CD8-positive, alpha-beta memory T cell (primary cell): ENCODE measurements at regions of chr13 and their contacts with region 1.

Region 1: GRCh38 chr13:99436686-99437416 is 64.4 kb upstream of the TM9SF2 start:
- DNase-seq: peak; percentile 91 to 96 (median 93)
- H3K4me3 ChIP-seq: peak overlapping the region; percentile 40
- H3K4me3 Mint-ChIP-seq: peak overlapping the region; percentile 29 to 76 (median 66)
- H3K27ac ChIP-seq: no peak overlapping the region
- H3K27ac Mint-ChIP-seq: peak overlapping the region; percentile 48 to 96 (median 86)
- H3K4me1 ChIP-seq: peaks cover 53% of the 10 kb centered on the region
- H3K4me1 Mint-ChIP-seq: peaks cover 55 to 62% (median 59%) of the 10 kb centered on the region in 3 donors
- H3K27me3 ChIP-seq: no peaks in the 10 kb centered on the region
- H3K27me3 Mint-ChIP-seq: no peaks in the 10 kb centered on the region

Region 2: GRCh38 chr13:99200432-99201167 is 236.3 kb before region 1 on chr13 and contains the start of gene UBAC2:
- CTCF ChIA-PET with region 1: interaction called, 12 read pairs
- POLR2A ChIA-PET with region 1: interaction called, 8 read pairs
- DNase-seq: peak; percentile 95 to 99 (median 98)
- H3K4me3 ChIP-seq: peak within 1 kb of the TSS; percentile 84
- H3K4me3 Mint-ChIP-seq: peak within 1 kb of the TSS; percentile 89 to 98 (median 95)
- H3K27ac ChIP-seq: peak within 1 kb of the TSS; percentile 95
- H3K27ac Mint-ChIP-seq: peak within 1 kb of the TSS; percentile 80 to 100 (median 98)
- H3K4me1 ChIP-seq: peaks cover 46% of the 10 kb centered on the region
- H3K4me1 Mint-ChIP-seq: peaks cover 54 to 71% (median 66%) of the 10 kb centered on the region in 3 donors
- H3K27me3 ChIP-seq: no peaks in the 10 kb centered on the region
- H3K27me3 Mint-ChIP-seq: peaks cover 0 to 4% of the 10 kb centered on the region in 2 donors
- total RNA-seq, gene UBAC2: 62.3 to 63.7 TPM

Region 3: GRCh38 chr13:99301913-99302636 is 134.8 kb before region 1 on chr13:
- CTCF ChIA-PET with region 1: interaction called, 22 read pairs
- POLR2A ChIA-PET with region 1: interaction called, 4 read pairs
- DNase-seq: no peak
- H3K4me3 ChIP-seq: peak overlapping the region; percentile 50
- H3K4me3 Mint-ChIP-seq: peak overlapping the region; percentile 88 to 95 (median 94)
- H3K27ac ChIP-seq: no peak overlapping the region
- H3K27ac Mint-ChIP-seq: peak overlapping the region; percentile 87 to 95 (median 92)
- H3K4me1 ChIP-seq: peaks cover 79% of the 10 kb centered on the region
- H3K4me1 Mint-ChIP-seq: peaks cover 76 to 84% (median 81%) of the 10 kb centered on the region in 3 donors
- H3K27me3 ChIP-seq: no peaks in the 10 kb centered on the region
- H3K27me3 Mint-ChIP-seq: no peaks in the 10 kb centered on the region

Region 4: DNA sequence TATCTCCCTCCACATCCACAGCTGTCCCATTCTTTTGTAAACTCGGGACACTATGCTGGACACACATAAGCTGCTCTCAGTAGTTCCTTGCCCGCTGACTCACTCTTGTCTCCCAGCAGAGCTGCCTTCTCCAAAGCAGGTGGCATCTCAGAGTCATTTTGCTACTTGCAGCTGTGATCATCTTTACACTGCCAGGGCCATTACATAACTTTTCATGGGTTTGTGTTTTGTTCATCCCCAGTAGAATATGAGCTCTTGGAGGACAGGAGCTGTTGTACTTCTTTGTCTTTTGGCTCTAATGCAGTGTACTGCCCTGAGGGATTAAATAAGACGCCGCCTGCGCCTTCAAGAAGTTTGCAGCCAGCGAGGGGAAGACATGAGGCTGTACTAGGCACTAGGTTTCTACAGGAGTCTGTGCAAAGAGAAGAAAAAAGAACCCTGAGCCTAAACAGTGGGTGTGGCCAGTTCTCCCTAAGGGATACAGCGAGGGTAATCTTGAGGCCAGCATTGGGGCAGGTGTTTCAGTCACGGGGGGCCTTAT is 88.9 kb before region 1 on chr13:
- CTCF ChIA-PET with region 1: interaction called, 43 read pairs
- POLR2A ChIA-PET with region 1: interaction called, 3 read pairs
- DNase-seq: no peak
- H3K4me3 ChIP-seq: no peak overlapping the region
- H3K4me3 Mint-ChIP-seq: peak overlapping the region in 4 of 7 donors; percentile 17 to 57 (median 46)
- H3K27ac ChIP-seq: no peak overlapping the region
- H3K27ac Mint-ChIP-seq: peak overlapping the region; percentile 84 to 99 (median 90)
- H3K4me1 ChIP-seq: peaks cover 64% of the 10 kb centered on the region
- H3K4me1 Mint-ChIP-seq: peaks cover 87 to 99% (median 99%) of the 10 kb centered on the region in 3 donors
- H3K27me3 ChIP-seq: no peaks in the 10 kb centered on the region
- H3K27me3 Mint-ChIP-seq: peaks cover 0 to 1% of the 10 kb centered on the region in 2 donors

Region 5: DNA sequence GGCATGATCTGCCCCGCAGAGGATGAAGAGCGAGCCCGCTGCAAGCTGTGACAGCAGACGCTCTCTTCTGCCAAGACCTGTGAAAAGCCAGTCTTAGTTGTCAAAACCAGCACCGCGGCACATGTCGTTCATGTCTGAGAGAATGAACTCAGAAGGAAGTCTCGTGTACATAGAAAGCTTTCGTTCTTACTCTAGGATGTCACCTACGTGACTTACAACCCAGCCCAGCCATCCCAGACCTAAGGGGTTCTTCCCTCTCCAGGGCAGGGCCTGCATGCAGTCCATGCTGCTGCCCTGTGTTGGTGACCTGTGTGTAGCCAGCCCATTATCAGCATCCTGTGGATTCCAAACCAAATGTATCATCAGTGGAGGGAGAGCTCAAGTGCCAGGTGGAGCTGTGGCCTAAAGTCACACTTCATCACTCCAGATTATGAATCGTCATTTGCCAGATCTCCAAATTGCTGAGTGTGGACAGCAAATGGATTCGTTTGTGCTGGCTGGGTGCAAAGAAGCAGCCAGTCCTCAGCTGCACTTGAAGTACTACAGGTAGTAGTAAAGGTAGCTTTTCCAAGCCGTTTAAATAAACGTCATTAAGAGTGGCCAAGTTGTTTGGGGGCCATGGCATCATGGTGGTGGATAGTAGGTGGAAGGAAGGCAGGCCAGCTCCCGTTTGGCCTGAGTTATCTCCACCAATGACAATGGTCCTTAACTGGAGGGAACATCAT is 55.8 kb before region 1 on chr13:
- CTCF ChIA-PET with region 1: interaction called, 81 read pairs
- POLR2A ChIA-PET with region 1: interaction called, 3 read pairs
- DNase-seq: peak; percentile 27 to 82 (median 62)
- H3K4me3 ChIP-seq: peak overlapping the region; percentile 14
- H3K4me3 Mint-ChIP-seq: peak overlapping the region; percentile 25 to 89 (median 73)
- H3K27ac ChIP-seq: peak overlapping the region; percentile 30
- H3K27ac Mint-ChIP-seq: peak overlapping the region; percentile 95 to 99 (median 98)
- H3K4me1 ChIP-seq: peaks cover 93% of the 10 kb centered on the region
- H3K4me1 Mint-ChIP-seq: peaks cover 84 to 98% (median 98%) of the 10 kb centered on the region in 3 donors
- H3K27me3 ChIP-seq: no peaks in the 10 kb centered on the region
- H3K27me3 Mint-ChIP-seq: no peaks in the 10 kb centered on the region

Region 6: GRCh38 chr13:99501184-99501847 is 64.5 kb after region 1 on chr13 and contains the start of gene TM9SF2:
- CTCF ChIA-PET with region 1: interaction called, 13 read pairs
- POLR2A ChIA-PET with region 1: no interaction called
- DNase-seq: peak; percentile 97 to 98 (median 97)
- H3K4me3 ChIP-seq: peak within 1 kb of the TSS; percentile 75
- H3K4me3 Mint-ChIP-seq: peak within 1 kb of the TSS; percentile 89 to 100 (median 98)
- H3K27ac ChIP-seq: peak within 1 kb of the TSS; percentile 94
- H3K27ac Mint-ChIP-seq: peak within 1 kb of the TSS; percentile 90 to 99 (median 98)
- H3K4me1 ChIP-seq: peaks cover 78% of the 10 kb centered on the region
- H3K4me1 Mint-ChIP-seq: peaks cover 71 to 92% (median 91%) of the 10 kb centered on the region in 3 donors
- H3K27me3 ChIP-seq: no peaks in the 10 kb centered on the region
- H3K27me3 Mint-ChIP-seq: peaks cover 0 to 5% of the 10 kb centered on the region in 2 donors
- total RNA-seq, gene TM9SF2: 88.0 to 96.0 TPM

Region 7: DNA sequence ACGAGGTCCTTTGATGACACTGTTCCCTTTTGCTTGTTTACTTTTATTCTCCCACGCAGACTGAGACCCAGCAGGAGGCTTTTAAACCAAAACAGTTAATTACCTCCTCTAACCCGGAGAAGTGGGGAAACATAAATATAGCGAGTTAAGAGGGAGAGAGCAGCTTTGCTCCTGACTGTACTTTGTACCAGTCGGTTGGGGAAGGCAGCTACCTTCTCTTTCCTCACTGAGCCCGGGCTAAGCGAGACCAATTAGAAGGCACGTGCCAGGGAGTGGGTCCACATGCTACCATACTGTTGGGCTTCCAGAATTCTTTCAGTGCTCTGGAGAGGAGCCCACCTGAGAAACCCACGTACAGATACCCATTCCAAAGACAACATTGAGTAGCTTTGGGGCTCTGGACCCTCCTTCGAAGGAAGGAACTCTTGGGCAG is 410.5 kb after region 1 on chr13:
- CTCF ChIA-PET with region 1: no interaction called
- POLR2A ChIA-PET with region 1: no interaction called
- DNase-seq: no peak
- H3K4me3 ChIP-seq: no peak overlapping the region
- H3K4me3 Mint-ChIP-seq: no peak overlapping the region
- H3K27ac ChIP-seq: no peak overlapping the region
- H3K27ac Mint-ChIP-seq: no peak overlapping the region
- H3K4me1 ChIP-seq: no peaks in the 10 kb centered on the region
- H3K4me1 Mint-ChIP-seq: peaks cover 0 to 1% (median 0%) of the 10 kb centered on the region in 3 donors
- H3K27me3 ChIP-seq: no peaks in the 10 kb centered on the region
- H3K27me3 Mint-ChIP-seq: no peaks in the 10 kb centered on the region

Region 8: DNA sequence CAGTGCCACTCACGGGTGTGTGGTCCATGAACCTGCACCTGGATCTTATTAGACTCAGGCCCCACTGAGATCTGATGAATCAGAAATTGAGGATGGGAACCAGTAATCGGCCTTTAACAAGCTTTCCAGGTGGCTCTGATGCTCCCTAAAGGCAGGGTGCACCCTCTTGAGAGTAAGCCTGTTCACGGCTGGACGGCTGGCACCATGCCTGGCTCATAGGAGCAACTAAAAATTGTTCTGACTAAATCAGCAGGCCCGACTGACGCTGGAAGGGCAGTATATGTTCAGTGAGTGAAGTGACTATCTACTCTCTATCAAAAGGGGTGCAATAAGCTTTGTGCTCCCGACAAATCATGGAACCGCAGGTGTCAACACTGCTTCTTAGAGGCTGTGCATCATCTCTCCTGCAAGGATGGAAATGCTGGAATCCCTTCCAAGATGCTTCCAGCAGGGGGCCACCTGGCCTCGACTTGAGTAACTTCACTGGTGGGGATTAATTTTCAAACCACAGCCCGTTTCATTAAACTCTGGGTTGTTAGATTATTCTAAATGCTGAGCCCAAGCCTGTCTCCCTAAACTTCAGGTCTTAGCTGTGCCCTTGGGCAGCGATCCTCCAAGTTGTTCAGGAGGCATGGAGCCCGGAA is 1209.3 kb after region 1 on chr13:
- CTCF ChIA-PET with region 1: no interaction called
- POLR2A ChIA-PET with region 1: no interaction called
- DNase-seq: no peak
- H3K4me3 ChIP-seq: no peak overlapping the region
- H3K4me3 Mint-ChIP-seq: no peak overlapping the region
- H3K27ac ChIP-seq: no peak overlapping the region
- H3K27ac Mint-ChIP-seq: no peak overlapping the region
- H3K4me1 ChIP-seq: no peaks in the 10 kb centered on the region
- H3K4me1 Mint-ChIP-seq: peaks cover 0 to 7% (median 0%) of the 10 kb centered on the region in 3 donors
- H3K27me3 ChIP-seq: no peaks in the 10 kb centered on the region
- H3K27me3 Mint-ChIP-seq: no peaks in the 10 kb centered on the region